Activated CD4-positive, alpha-beta memory T cell treated with anti-CD3 and anti-CD28 coated beads for 36 hours (primary cell): ENCODE measurements at regions of chrX and their contacts with region 1.

Region 1: DNA sequence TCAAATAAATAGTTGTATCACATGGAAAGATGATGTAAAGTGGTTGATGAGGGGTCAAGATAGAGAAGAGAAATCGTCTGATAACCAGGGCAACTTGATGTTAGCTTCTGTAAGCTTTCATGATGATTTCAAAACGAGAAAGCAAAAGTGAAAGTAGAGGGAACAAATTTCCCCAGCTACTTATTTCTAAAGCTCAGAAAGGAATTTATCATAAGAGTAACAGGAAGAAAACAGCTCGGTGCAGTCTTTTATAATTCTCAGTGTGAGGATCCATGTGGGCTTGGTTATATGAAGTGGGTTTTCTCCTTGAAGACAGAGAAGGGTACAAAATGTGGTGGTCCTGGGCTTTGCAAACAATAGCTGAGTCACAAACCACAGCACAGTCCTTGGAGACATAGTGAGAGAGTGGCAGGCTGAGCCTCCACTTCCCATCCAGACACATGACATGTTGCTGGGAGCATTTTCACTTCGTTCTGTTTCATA is 32.1 kb upstream of the GLRA2 start:
- DNase-seq: peak; percentile 17
- H3K4me3 Mint-ChIP-seq: peak overlapping the region; percentile 71
- H3K27ac Mint-ChIP-seq: peak overlapping the region; percentile 83
- H3K4me1 Mint-ChIP-seq: peaks cover 18% of the 10 kb centered on the region
- H3K27me3 Mint-ChIP-seq: no peaks in the 10 kb centered on the region

Region 2: GRCh38 chrX:14476205-14476604 is 21.0 kb before region 1 on chrX:
- CTCF ChIA-PET with region 1: no interaction called
- POLR2A ChIA-PET with region 1: no interaction called
- intact Hi-C with region 1: no loop called
- DNase-seq: no peak
- H3K4me3 Mint-ChIP-seq: no peak overlapping the region
- H3K27ac Mint-ChIP-seq: no peak overlapping the region
- H3K4me1 Mint-ChIP-seq: no peaks in the 10 kb centered on the region
- H3K27me3 Mint-ChIP-seq: no peaks in the 10 kb centered on the region

Region 3: GRCh38 chrX:15151267-15152186 is 654.3 kb after region 1 on chrX:
- CTCF ChIA-PET with region 1: no interaction called
- POLR2A ChIA-PET with region 1: no interaction called
- intact Hi-C with region 1: loop called (anchors 10 kb)
- DNase-seq: peak; percentile 51
- H3K4me3 Mint-ChIP-seq: peak overlapping the region; percentile 33
- H3K27ac Mint-ChIP-seq: peak overlapping the region; percentile 57
- H3K4me1 Mint-ChIP-seq: peaks cover 22% of the 10 kb centered on the region
- H3K27me3 Mint-ChIP-seq: peaks cover 4% of the 10 kb centered on the region